H1 (cell line): ENCODE measurements at regions of chr3 and their contacts with region 1.

Region 1: DNA sequence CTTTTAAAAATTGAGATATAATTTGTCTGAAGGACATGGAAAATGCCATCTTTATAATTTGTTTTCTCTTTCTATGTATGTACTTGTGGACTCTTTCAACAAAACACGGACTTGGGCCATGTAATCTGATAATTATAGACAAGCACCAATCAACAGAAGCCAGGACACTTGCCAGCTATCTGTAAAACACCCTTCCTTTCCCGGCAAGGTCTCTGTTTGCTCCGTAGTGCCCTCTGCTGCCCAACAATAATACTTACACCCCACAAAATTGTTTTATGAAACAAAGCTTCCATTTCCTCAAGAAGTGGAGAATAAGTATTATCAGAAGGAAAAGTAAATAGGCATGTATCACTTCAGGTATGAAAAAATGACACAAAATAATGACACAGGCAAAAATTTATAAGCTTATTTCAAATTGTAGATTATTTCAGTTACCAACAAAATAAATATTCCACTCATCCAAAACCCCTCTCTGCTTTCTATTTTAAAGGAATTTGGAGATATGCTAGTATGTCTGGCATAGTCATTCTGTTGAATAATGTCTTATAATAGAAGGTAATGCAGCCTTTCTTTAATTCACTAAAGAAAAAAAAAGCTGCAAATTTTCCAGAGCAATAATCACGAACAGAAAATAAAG is 32.8 kb downstream of the MYH15 start:
- DNase-seq: peak in 1 of 2 experiments; percentile 66
- H3K4me3 ChIP-seq: no peak overlapping the region
- H3K27ac ChIP-seq: no peak overlapping the region
- H3K4me1 ChIP-seq: 0 out of 7 replicates have a peak, but pooled peaks cover 0 to 2% (median 0%) of the 10 kb centered on the region in 4 experiments
- H3K27me3 ChIP-seq: no peaks in the 10 kb centered on the region
- CTCF ChIP-seq: peak; percentile 22 to 69 (median 64)
- EP300 ChIP-seq: no peak
- POLR2A ChIP-seq: no peak
- RAD21 ChIP-seq: peak; percentile 80 to 84

Region 2: DNA sequence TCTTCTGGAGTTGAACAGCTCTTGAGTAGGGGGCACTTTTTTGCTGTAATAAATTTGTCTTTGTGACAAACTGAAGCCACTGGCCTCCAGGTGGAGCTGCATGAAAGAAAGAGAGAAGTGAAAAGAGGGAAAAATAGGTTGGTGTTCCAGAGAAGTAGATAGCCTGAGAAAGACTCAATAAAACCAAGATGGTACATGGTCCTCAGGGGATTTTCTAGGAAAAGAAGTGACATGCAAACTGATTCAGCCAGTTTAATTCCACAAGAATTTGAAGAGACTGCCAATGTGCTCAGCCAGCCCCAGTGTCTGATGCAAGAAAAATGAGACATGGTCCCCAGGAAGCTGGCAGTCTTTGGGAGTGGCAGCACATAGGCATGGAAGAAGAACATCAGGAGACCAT is 539.5 kb before region 1 on chr3:
- CTCF ChIA-PET with region 1: interaction called, 10 read pairs
- POLR2A ChIA-PET with region 1: no interaction called
- DNase-seq: no peak
- H3K4me3 ChIP-seq: no peak overlapping the region
- H3K27ac ChIP-seq: no peak overlapping the region
- H3K4me1 ChIP-seq: no peaks in the 10 kb centered on the region; a peak in 1 of 7 replicates
- H3K27me3 ChIP-seq: no peaks in the 10 kb centered on the region
- CTCF ChIP-seq: peak in 2 of 3 experiments; percentile 49 to 52; a peak in 3 of 4 replicates
- EP300 ChIP-seq: no peak
- POLR2A ChIP-seq: no peak
- RAD21 ChIP-seq: peak; percentile 78 to 83

Region 3: DNA sequence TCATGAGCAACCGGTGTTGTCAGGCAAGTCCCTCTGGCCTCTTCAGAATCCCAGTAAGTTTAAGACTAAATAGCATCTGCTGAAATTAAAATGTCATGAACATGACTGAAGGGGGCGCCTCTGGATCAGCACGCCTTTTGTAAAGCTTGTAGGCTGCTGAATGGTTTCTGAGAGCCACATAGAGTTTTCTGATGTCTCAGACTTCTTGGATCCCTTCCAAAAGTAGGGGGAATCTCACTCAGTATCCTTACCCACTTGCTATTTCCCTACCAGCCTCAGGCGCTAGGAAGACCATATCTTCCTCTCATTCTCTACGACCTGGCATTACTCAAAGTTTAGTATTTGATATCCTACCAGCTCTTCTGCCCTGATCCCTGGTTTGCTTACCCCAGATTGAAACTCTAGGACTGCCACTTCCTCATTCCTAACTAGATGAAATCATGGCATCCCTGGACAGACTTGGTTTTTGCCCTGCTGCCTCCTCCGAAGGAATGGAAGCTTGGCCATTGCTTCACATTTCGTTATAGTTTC is 324.1 kb before region 1 on chr3:
- CTCF ChIA-PET with region 1: interaction called, 16 read pairs
- POLR2A ChIA-PET with region 1: no interaction called
- DNase-seq: peak; percentile 29 to 64
- H3K4me3 ChIP-seq: no peak overlapping the region
- H3K27ac ChIP-seq: no peak overlapping the region
- H3K4me1 ChIP-seq: peaks cover 0 to 4% (median 0%) of the 10 kb centered on the region in 4 experiments; a peak in 1 of 7 replicates
- H3K27me3 ChIP-seq: no peaks in the 10 kb centered on the region
- CTCF ChIP-seq: peak in 2 of 3 experiments; percentile 70 to 74; a peak in 3 of 4 replicates
- EP300 ChIP-seq: no peak
- POLR2A ChIP-seq: no peak
- RAD21 ChIP-seq: peak; percentile 87 to 88

Region 4: DNA sequence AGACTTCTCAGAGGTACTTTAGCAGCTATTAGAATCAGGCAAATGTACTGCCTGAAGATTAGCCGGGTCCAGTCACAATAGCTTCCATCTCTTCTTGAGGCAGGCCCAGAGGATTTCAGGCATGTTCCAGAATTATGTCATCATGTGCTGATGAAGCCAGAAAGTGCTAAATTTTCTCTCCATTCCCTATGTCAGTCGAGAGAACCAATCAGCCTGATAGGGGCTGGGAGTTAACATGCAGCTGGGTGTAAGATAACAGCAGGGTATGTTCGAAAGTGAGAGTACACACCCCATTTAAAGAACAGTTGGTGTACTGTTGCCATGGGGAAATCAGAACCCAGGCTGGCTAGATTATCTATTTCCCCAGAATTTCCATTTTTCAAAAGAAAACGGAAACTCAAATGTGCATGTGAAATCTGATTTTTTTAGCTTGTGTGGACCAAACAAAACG is 15.9 kb before region 1 on chr3:
- CTCF ChIA-PET with region 1: interaction called, 12 read pairs
- POLR2A ChIA-PET with region 1: no interaction called
- DNase-seq: no peak
- H3K4me3 ChIP-seq: no peak overlapping the region
- H3K27ac ChIP-seq: no peak overlapping the region
- H3K4me1 ChIP-seq: peaks cover 0 to 3% (median 0%) of the 10 kb centered on the region in 4 experiments; a peak in 1 of 7 replicates
- H3K27me3 ChIP-seq: no peaks in the 10 kb centered on the region
- CTCF ChIP-seq: no peak
- EP300 ChIP-seq: no peak
- POLR2A ChIP-seq: no peak
- RAD21 ChIP-seq: no peak

Region 5: DNA sequence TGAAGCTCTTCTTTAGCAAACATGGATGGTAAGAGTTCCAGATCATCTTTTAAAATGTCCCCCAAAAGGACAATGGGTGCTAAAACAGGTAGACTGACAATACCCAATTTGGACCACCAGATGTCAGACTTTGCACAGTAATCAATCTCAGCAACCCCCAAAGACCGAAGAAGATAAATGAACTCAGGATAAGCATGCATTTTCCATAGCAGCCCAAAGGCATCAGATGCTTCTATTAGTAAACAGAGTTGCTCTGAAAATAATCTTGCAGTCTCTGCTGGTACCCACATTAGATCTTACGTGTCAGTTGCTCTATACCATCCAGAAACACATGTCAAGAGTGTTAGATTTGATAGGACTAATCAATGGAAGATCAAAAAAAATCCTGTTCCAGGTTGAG is 12.1 kb after region 1 on chr3:
- CTCF ChIA-PET with region 1: interaction called, 23 read pairs
- POLR2A ChIA-PET with region 1: no interaction called
- DNase-seq: no peak
- H3K4me3 ChIP-seq: no peak overlapping the region
- H3K27ac ChIP-seq: no peak overlapping the region
- H3K4me1 ChIP-seq: peaks cover 0 to 9% (median 8%) of the 10 kb centered on the region in 4 experiments; a peak in 4 of 7 replicates
- H3K27me3 ChIP-seq: no peaks in the 10 kb centered on the region
- CTCF ChIP-seq: peak in 2 of 3 experiments; percentile 77 to 78; a peak in 3 of 4 replicates
- EP300 ChIP-seq: no peak
- POLR2A ChIP-seq: no peak
- RAD21 ChIP-seq: peak; percentile 94 to 96